ENCODE measurements at regions of chr17 and their contacts with region 1.

Region 1: DNA sequence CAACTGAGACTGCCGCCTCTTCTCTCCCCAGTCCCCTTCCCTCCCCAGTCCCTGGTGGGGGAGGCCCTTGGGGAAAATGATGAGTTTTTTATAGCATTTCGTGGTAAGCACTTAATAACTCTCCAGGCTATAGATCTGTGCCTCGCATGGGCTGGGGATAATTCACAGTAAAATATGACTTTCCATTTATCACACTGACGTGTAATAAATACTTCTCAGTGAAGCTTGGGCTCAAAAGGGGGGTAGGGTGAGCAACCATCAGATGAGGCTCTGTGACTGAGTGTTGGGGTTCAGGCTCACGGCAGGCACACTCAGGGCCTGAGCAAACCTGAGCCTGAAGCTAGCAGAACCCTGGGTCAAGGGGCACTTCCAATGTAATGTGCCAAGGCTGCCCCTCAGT is 101.6 kb downstream of the CCT6B start:
- DNase-seq: peak; percentile 24
- H3K4me3 Mint-ChIP-seq: no peak overlapping the region
- H3K27ac Mint-ChIP-seq: no peak overlapping the region
- H3K4me1 Mint-ChIP-seq: peaks cover 21% of the 10 kb centered on the region
- H3K27me3 Mint-ChIP-seq: peaks cover 9% of the 10 kb centered on the region

Region 2: GRCh38 chr17:34800661-34801060 is 59.0 kb before region 1 on chr17:
- CTCF ChIA-PET with region 1: no interaction called
- POLR2A ChIA-PET with region 1: no interaction called
- intact Hi-C with region 1: no loop called
- DNase-seq: no peak
- H3K4me3 Mint-ChIP-seq: no peak overlapping the region
- H3K27ac Mint-ChIP-seq: no peak overlapping the region
- H3K4me1 Mint-ChIP-seq: no peaks in the 10 kb centered on the region
- H3K27me3 Mint-ChIP-seq: peaks cover 7% of the 10 kb centered on the region

Region 3: GRCh38 chr17:34843682-34844081 is 16.0 kb before region 1 on chr17:
- CTCF ChIA-PET with region 1: no interaction called
- POLR2A ChIA-PET with region 1: no interaction called
- intact Hi-C with region 1: loop called (anchors 2 kb)
- DNase-seq: no peak
- H3K4me3 Mint-ChIP-seq: no peak overlapping the region
- H3K27ac Mint-ChIP-seq: no peak overlapping the region
- H3K4me1 Mint-ChIP-seq: peaks cover 4% of the 10 kb centered on the region
- H3K27me3 Mint-ChIP-seq: no peaks in the 10 kb centered on the region